ENCODE measurements at regions of chr12 and their contacts with region 1.

Region 1: DNA sequence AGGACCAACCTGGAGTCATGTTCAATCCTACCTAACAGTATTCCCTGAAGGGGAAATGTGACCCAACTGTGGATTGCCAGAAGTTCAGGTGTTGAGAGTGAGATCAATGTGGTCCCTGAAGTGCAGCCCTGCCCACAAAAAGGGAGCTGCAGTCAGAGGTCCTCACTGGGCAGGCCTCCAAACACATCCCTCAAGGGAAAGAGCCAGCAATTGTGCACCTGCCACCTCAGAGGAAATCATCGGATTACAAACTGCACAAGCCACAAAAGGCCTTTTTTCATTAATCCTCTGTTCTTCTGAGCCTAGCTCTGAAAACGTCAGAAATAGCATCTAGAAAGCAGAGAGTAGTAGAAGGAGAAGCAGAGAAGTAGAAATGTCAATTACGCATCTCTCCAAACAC is 10.8 kb upstream of the MDM1 start:
- DNase-seq: no peak
- ATAC-seq: no peak
- H3K4me3 Mint-ChIP-seq: no peak overlapping the region
- H3K27ac Mint-ChIP-seq: no peak overlapping the region
- H3K4me1 Mint-ChIP-seq: peaks cover 11% of the 10 kb centered on the region
- H3K27me3 Mint-ChIP-seq: no peaks in the 10 kb centered on the region
- CTCF ChIP-seq: no peak

Region 2: GRCh38 chr12:68119724-68120211 is 223.2 kb before region 1 on chr12:
- CTCF ChIA-PET with region 1: no interaction called
- POLR2A ChIA-PET with region 1: no interaction called
- intact Hi-C with region 1: no loop called
- DNase-seq: peak; percentile 86
- ATAC-seq: peak; percentile 72
- H3K4me3 Mint-ChIP-seq: peak overlapping the region; percentile 11
- H3K27ac Mint-ChIP-seq: no peak overlapping the region
- H3K4me1 Mint-ChIP-seq: peaks cover 26% of the 10 kb centered on the region
- H3K27me3 Mint-ChIP-seq: peaks cover 2% of the 10 kb centered on the region
- CTCF ChIP-seq: no peak

Region 3: GRCh38 chr12:68200854-68201253 is 142.1 kb before region 1 on chr12:
- CTCF ChIA-PET with region 1: no interaction called
- POLR2A ChIA-PET with region 1: no interaction called
- intact Hi-C with region 1: no loop called
- DNase-seq: no peak
- ATAC-seq: peak; percentile 49
- H3K4me3 Mint-ChIP-seq: no peak overlapping the region
- H3K27ac Mint-ChIP-seq: no peak overlapping the region
- H3K4me1 Mint-ChIP-seq: peaks cover 45% of the 10 kb centered on the region
- H3K27me3 Mint-ChIP-seq: no peaks in the 10 kb centered on the region
- CTCF ChIP-seq: no peak

Region 4: DNA sequence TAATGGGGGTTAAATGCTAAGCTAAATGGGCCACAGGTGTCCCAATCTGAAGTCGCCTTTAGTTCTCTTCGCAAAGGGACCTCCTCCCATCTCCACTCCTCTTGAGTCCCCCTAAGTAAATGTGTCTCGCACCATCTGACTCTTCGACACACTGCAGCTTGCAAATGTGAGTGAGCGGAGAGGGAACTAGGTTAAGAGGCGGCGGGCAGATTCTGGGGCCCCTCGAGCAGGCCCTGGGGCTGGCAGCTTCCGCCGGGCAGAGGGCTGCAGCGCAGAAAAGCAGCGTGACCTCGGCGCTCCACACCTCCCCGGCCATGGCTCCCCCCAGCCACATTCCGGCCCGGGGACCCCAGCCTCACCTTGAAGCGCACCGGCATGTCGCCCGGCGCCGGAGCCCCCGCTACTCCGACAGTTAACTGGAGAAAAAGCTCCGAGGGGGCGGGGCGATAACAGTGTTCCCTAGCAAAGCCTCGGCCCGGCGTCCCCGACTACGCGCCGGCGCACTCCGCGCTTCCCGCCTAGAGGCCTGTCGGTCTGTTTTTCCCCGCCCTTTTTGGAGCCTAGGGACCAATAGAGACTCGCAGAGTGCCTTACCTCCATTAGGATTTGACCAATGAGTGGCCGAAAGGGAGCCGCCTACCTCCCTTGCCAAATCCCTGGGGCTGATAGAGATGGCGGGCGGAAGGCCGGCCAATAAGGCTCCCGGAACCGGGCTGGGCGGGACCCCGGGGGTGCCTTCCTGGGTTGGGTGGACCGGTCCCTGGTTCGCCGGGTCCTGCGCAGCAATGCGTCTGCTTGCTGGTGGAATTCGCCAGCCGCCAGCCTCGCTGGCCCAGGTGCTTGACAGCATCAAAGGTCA is 10.9 kb before region 1 on chr12 and contains the start of gene MDM1:
- CTCF ChIA-PET with region 1: interaction called, 12 read pairs
- POLR2A ChIA-PET with region 1: interaction called, 3 read pairs
- intact Hi-C with region 1: no loop called
- DNase-seq: peak; percentile 98
- ATAC-seq: peak; percentile 98
- H3K4me3 Mint-ChIP-seq: peak within 1 kb of the TSS; percentile 83
- H3K27ac Mint-ChIP-seq: peak within 1 kb of the TSS; percentile 83
- H3K4me1 Mint-ChIP-seq: peaks cover 39% of the 10 kb centered on the region
- H3K27me3 Mint-ChIP-seq: no peaks in the 10 kb centered on the region
- CTCF ChIP-seq: no peak
- total RNA-seq, gene MDM1: 15.4 to 17.9 TPM

Measured in activated CD8-positive, alpha-beta T cell treated with anti-CD3 and anti-CD28 coated beads for 36 hours (primary cell).